Activated naive CD4-positive, alpha-beta T cell treated with anti-CD3 and anti-CD28 coated beads for 36 hours (primary cell): ENCODE measurements at regions of chr6 and their contacts with region 1.

Region 1: GRCh38 chr6:37018198-37019064 is 13.0 kb downstream of the FGD2 start:
- DNase-seq: peak; percentile 97
- H3K4me3 Mint-ChIP-seq: no peak overlapping the region
- H3K27ac Mint-ChIP-seq: peak overlapping the region; percentile 26
- H3K4me1 Mint-ChIP-seq: peaks cover 38% of the 10 kb centered on the region
- H3K27me3 Mint-ChIP-seq: no peaks in the 10 kb centered on the region

Region 2: GRCh38 chr6:36851149-36851614 is 167.2 kb before region 1 on chr6:
- CTCF ChIA-PET with region 1: interaction called, 10 read pairs
- intact Hi-C with region 1: no loop called
- DNase-seq: peak; percentile 64
- H3K4me3 Mint-ChIP-seq: no peak overlapping the region
- H3K27ac Mint-ChIP-seq: no peak overlapping the region
- H3K4me1 Mint-ChIP-seq: no peaks in the 10 kb centered on the region
- H3K27me3 Mint-ChIP-seq: no peaks in the 10 kb centered on the region

Region 3: GRCh38 chr6:36977470-36977941 is 40.9 kb before region 1 on chr6:
- CTCF ChIA-PET with region 1: interaction called, 16 read pairs
- intact Hi-C with region 1: no loop called
- DNase-seq: no peak
- H3K4me3 Mint-ChIP-seq: no peak overlapping the region
- H3K27ac Mint-ChIP-seq: no peak overlapping the region
- H3K4me1 Mint-ChIP-seq: peaks cover 23% of the 10 kb centered on the region
- H3K27me3 Mint-ChIP-seq: no peaks in the 10 kb centered on the region

Region 4: GRCh38 chr6:37051138-37052026 is 33.0 kb after region 1 on chr6:
- CTCF ChIA-PET with region 1: interaction called, 161 read pairs
- intact Hi-C with region 1: loop called (anchors 1 kb)
- DNase-seq: peak; percentile 96
- H3K4me3 Mint-ChIP-seq: peak overlapping the region; percentile 86
- H3K27ac Mint-ChIP-seq: peak overlapping the region; percentile 99
- H3K4me1 Mint-ChIP-seq: peaks cover 56% of the 10 kb centered on the region
- H3K27me3 Mint-ChIP-seq: no peaks in the 10 kb centered on the region

Region 5: GRCh38 chr6:37222125-37222967 is 203.9 kb after region 1 on chr6:
- CTCF ChIA-PET with region 1: interaction called, 704 read pairs
- intact Hi-C with region 1: no loop called
- DNase-seq: peak; percentile 90
- H3K4me3 Mint-ChIP-seq: peak overlapping the region; percentile 56
- H3K27ac Mint-ChIP-seq: peak overlapping the region; percentile 26
- H3K4me1 Mint-ChIP-seq: peaks cover 24% of the 10 kb centered on the region
- H3K27me3 Mint-ChIP-seq: no peaks in the 10 kb centered on the region

Region 6: DNA sequence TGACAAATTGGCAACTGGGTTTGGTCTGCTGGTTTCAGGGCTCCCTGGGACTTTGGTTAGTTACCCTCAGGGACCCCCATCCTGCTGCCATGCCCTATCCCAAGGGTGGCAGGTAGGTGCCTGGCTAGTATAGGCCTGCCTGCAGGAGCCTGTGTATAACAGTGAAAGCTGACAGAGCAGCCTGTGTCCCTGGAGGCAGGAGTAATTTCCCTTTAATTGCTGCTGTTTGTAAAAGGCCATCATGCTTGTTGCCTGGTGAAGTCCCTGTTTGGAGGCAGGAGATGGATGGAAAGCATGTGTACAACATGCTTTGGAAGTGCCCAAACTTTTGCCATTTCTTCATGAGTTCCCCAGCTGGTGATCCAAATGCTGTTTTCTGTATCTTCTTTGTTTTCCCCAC is 444.7 kb after region 1 on chr6:
- CTCF ChIA-PET with region 1: no interaction called
- intact Hi-C with region 1: no loop called
- DNase-seq: no peak
- H3K4me3 Mint-ChIP-seq: no peak overlapping the region
- H3K27ac Mint-ChIP-seq: no peak overlapping the region
- H3K4me1 Mint-ChIP-seq: peaks cover 1% of the 10 kb centered on the region
- H3K27me3 Mint-ChIP-seq: no peaks in the 10 kb centered on the region

Region 7: GRCh38 chr6:37566111-37566949 is 547.9 kb after region 1 on chr6:
- CTCF ChIA-PET with region 1: no interaction called
- intact Hi-C with region 1: loop called (anchors 5 kb)
- DNase-seq: peak; percentile 72
- H3K4me3 Mint-ChIP-seq: no peak overlapping the region
- H3K27ac Mint-ChIP-seq: no peak overlapping the region
- H3K4me1 Mint-ChIP-seq: peaks cover 2% of the 10 kb centered on the region
- H3K27me3 Mint-ChIP-seq: no peaks in the 10 kb centered on the region